Activated naive CD8-positive, alpha-beta T cell treated with anti-CD3 and anti-CD28 coated beads, Interleukin-2, amount 10 ng/mL, durations not matched to agents 7 days and 5 days (primary cell): ENCODE measurements at regions of chr6 and their contacts with region 1.

Region 1: DNA sequence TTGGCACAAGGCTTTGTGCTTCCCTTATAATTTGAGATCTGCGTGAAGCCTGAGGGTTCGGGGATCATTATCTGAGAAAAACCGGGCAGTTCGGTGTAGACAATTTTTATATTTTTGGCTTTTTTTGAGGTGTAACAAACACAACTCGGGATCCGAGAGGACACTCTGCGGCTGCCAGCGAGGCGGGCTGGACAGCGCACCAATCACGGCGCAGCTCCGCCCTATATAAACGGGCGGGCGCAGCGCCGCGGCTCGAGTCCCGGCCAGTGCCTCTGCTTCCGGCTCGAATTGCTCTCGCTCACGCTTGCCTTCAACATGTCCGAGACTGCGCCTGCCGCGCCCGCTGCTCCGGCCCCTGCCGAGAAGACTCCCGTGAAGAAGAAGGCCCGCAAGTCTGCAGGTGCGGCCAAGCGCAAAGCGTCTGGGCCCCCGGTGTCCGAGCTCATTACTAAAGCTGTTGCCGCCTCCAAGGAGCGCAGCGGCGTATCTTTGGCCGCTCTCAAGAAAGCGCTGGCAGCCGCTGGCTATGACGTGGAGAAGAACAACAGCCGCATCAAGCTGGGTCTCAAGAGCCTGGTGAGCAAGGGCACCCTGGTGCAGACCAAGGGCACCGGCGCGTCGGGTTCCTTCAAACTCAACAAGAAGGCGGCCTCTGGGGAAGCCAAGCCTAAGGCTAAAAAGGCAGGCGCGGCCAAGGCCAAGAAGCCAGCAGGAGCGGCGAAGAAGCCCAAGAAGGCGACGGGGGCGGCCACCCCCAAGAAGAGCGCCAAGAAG is 69.0 kb downstream of the HFE start:
- DNase-seq: peak; percentile 94
- ATAC-seq: peak; percentile 44
- H3K4me3 Mint-ChIP-seq: peak overlapping the region; percentile 100
- H3K27ac Mint-ChIP-seq: peak overlapping the region; percentile 99
- H3K4me1 Mint-ChIP-seq: peaks cover 43% of the 10 kb centered on the region
- H3K27me3 Mint-ChIP-seq: no peaks in the 10 kb centered on the region

Region 2: DNA sequence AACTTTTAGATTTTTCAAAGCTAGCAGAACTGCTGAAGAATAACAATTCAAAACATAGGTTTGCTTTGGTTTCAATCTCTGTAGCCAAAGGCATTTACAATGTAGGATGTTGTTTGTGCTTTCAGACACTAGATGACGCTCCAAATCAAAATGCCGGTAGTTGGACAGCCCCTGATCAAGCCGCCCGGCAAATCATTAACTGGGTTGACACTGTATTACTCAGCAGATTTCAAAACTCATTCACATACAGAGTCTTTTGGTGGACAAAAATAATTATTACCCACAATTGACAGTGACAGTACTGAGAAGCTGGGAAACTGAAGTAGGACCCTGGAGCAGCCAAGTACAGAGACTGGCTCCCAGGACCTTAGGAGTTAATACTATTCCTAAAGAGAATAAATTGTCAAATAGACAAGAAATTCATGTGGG is 90.3 kb before region 1 on chr6:
- POLR2A ChIA-PET with region 1: interaction called, 40 read pairs
- DNase-seq: no peak
- ATAC-seq: peak; percentile 89
- H3K4me3 Mint-ChIP-seq: no peak overlapping the region
- H3K27ac Mint-ChIP-seq: no peak overlapping the region
- H3K4me1 Mint-ChIP-seq: peaks cover 8% of the 10 kb centered on the region
- H3K27me3 Mint-ChIP-seq: peaks cover 26% of the 10 kb centered on the region

Region 3: DNA sequence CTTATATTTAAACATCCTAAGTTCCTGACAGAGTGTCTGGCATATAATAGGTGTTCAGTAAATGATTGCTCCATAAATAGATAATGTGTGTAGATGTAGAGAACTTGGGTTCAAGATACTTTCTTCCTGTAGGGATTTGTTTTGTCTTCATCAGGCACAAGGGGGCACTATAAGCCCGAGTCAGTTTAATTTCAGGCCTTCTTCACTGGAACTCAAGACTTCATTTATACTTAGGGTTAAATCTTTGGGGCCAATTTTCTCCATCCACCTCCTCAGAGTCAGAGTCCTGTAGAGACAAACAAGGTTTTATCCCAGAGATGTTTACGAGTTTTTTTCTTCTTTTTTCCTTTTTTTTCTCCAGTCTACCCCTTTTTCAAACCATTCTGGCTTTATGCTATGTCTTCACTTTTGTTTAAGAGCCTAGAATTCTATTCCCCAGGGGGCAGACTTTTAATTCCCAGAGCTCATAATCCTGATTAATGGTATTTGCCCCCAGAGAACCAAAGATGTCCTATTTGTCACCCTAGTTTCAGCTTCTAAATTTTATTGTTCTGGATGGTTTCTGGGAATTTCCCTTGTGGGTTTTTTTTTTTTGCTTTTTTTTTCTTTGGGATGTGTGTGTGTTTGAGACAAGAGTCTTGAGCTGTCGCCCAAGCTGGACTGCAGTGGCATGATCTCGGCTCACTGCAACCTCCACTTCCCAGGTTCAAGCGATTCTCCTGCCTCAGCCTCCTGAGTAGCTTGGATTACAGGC is 19.3 kb after region 1 on chr6:
- POLR2A ChIA-PET with region 1: interaction called, 421 read pairs
- DNase-seq: no peak
- ATAC-seq: no peak
- H3K4me3 Mint-ChIP-seq: peak overlapping the region; percentile 54
- H3K27ac Mint-ChIP-seq: peak overlapping the region; percentile 76
- H3K4me1 Mint-ChIP-seq: peaks cover 41% of the 10 kb centered on the region
- H3K27me3 Mint-ChIP-seq: no peaks in the 10 kb centered on the region

Region 4: GRCh38 chr6:26223650-26224546 is 67.6 kb after region 1 on chr6:
- POLR2A ChIA-PET with region 1: interaction called, 13 read pairs
- DNase-seq: peak; percentile 59
- ATAC-seq: peak; percentile 77
- H3K4me3 Mint-ChIP-seq: no peak overlapping the region
- H3K27ac Mint-ChIP-seq: no peak overlapping the region
- H3K4me1 Mint-ChIP-seq: peaks cover 29% of the 10 kb centered on the region
- H3K27me3 Mint-ChIP-seq: no peaks in the 10 kb centered on the region

Region 5: DNA sequence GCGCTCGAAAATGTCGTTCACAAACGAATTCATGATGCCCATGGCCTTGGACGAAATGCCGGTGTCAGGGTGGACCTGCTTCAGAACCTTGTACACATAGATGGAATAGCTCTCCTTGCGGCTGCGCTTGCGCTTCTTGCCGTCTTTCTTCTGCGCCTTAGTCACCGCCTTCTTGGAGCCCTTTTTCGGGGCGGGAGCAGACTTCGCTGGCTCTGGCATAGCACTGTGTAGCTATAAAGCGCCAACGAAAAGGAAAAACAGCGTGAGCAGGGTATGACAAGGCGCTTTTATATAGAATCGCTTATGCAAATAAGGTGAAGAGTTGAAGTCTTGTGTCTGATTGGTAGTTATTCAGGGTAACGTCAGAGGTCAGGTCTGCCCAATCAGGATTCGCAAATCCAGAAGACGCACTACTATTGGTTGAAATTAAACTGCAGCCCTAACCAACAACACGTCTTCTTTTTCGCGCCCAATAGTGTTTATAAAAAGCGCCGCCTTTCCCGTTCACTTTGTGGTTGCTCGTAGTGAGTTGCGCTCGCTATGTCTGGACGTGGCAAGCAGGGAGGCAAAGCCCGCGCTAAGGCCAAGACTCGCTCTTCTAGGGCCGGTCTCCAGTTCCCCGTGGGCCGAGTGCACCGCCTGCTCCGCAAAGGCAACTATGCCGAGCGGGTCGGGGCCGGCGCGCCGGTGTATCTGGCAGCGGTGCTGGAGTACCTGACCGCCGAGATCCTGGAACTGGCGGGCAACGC is 976.4 kb after region 1 on chr6:
- POLR2A ChIA-PET with region 1: interaction called, 67 read pairs
- DNase-seq: peak; percentile 90
- ATAC-seq: peak; percentile 76
- H3K4me3 Mint-ChIP-seq: no peak overlapping the region
- H3K27ac Mint-ChIP-seq: no peak overlapping the region
- H3K4me1 Mint-ChIP-seq: peaks cover 46% of the 10 kb centered on the region
- H3K27me3 Mint-ChIP-seq: no peaks in the 10 kb centered on the region

Region 6: GRCh38 chr6:27864906-27865849 is 1708.9 kb after region 1 on chr6:
- POLR2A ChIA-PET with region 1: interaction called, 41 read pairs
- DNase-seq: peak; percentile 83
- ATAC-seq: peak; percentile 56
- H3K4me3 Mint-ChIP-seq: peak overlapping the region; percentile 99
- H3K27ac Mint-ChIP-seq: peak overlapping the region; percentile 100
- H3K4me1 Mint-ChIP-seq: peaks cover 57% of the 10 kb centered on the region
- H3K27me3 Mint-ChIP-seq: no peaks in the 10 kb centered on the region